ENCODE measurements at regions of chr16 and their contacts with region 1.

Region 1: DNA sequence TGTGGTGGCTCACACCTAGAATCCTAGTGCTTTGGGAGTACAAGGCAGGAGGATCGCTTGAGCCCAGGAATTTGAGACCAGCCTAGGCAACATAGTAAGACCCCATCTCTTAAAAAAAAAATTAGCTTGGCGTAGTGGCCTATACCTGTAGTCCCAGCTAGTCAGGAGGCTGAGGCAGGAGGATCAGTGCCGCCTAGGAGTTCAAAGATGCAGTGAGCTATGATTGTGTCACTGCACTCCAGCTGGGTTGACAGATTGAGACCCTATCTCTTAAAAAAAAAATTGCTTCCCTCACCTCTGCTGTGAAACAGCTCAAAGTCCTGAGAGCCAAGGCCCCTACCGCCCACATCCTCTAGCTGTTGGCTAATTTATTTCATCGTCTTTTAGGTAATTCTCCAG is 10.2 kb downstream of the NDE1 start:
- DNase-seq: no peak
- CTCF ChIP-seq: no peak

Region 2: GRCh38 chr16:15564604-15565339 is 95.4 kb before region 1 on chr16:
- CTCF ChIA-PET with region 1: no interaction called
- POLR2A ChIA-PET with region 1: no interaction called
- DNase-seq: no peak
- CTCF ChIP-seq: no peak

Region 3: GRCh38 chr16:15672514-15673167 is 12.4 kb after region 1 on chr16:
- CTCF ChIA-PET with region 1: interaction called, 13 read pairs
- POLR2A ChIA-PET with region 1: interaction called, 4 read pairs
- DNase-seq: no peak
- CTCF ChIP-seq: no peak